Endothelial cell of umbilical vein (primary cell): ENCODE measurements at regions of chr20 and their contacts with region 1.

Region 1: GRCh38 chr20:44217342-44218092 is 6.9 kb upstream of the OSER1 start:
- DNase-seq: peak; percentile 55
- H3K4me3 ChIP-seq: no peak overlapping the region
- H3K27ac ChIP-seq: no peak overlapping the region
- H3K4me1 ChIP-seq: no peaks in the 10 kb centered on the region
- H3K27me3 ChIP-seq: no peaks in the 10 kb centered on the region
- CTCF ChIP-seq: peak; percentile 80 to 91
- POLR2A ChIP-seq: no peak

Region 2: GRCh38 chr20:44196271-44196670 is 21.2 kb before region 1 on chr20:
- CTCF ChIA-PET with region 1: interaction called, 10 read pairs
- POLR2A ChIA-PET with region 1: no interaction called
- dilution Hi-C with region 1: no loop called
- intact Hi-C with region 1: no loop called
- DNase-seq: no peak
- H3K4me3 ChIP-seq: no peak overlapping the region
- H3K27ac ChIP-seq: no peak overlapping the region
- H3K4me1 ChIP-seq: no peaks in the 10 kb centered on the region
- H3K27me3 ChIP-seq: peaks cover 0 to 2% of the 10 kb centered on the region in 2 experiments
- CTCF ChIP-seq: no peak
- POLR2A ChIP-seq: no peak

Region 3: GRCh38 chr20:44310664-44311639 is 93.4 kb after region 1 on chr20 and contains the start of gene FITM2:
- CTCF ChIA-PET with region 1: interaction called, 199 read pairs
- POLR2A ChIA-PET with region 1: interaction called, 3 read pairs
- dilution Hi-C with region 1: no loop called
- intact Hi-C with region 1: loop called (anchors 1 kb)
- DNase-seq: peak; percentile 96
- H3K4me3 ChIP-seq: peak within 1 kb of the TSS; percentile 37 to 71 (median 65)
- H3K27ac ChIP-seq: no peak within 1 kb of the TSS
- H3K4me1 ChIP-seq: peaks cover 8% of the 10 kb centered on the region
- H3K27me3 ChIP-seq: no peaks in the 10 kb centered on the region
- CTCF ChIP-seq: peak; percentile 99
- POLR2A ChIP-seq: peak; percentile 72
- total RNA-seq, gene FITM2: 6.8 and 7.7 TPM in 2 replicates

Region 4: DNA sequence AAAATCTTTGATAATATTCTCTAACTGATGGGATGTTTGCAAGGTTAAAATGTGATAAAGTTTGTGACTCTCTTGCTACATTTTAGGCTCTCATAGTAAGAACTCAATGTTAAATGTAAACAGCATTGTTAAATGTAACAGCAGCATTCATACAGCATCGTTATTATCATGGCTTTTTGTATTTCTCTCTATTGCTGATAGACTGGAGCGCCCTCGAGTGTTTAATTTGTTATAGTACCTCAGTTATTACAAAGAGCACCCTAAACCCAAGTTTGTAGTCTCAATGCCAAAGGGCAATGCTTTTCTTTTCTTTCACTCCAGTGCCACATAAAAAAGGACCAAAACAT is 243.3 kb after region 1 on chr20:
- CTCF ChIA-PET with region 1: interaction called, 9 read pairs
- POLR2A ChIA-PET with region 1: interaction called, 4 read pairs
- dilution Hi-C with region 1: no loop called
- intact Hi-C with region 1: loop called (anchors 2 kb)
- DNase-seq: peak; percentile 16
- H3K4me3 ChIP-seq: no peak overlapping the region
- H3K27ac ChIP-seq: no peak overlapping the region
- H3K4me1 ChIP-seq: no peaks in the 10 kb centered on the region
- H3K27me3 ChIP-seq: no peaks in the 10 kb centered on the region
- CTCF ChIP-seq: peak; percentile 5 to 19
- POLR2A ChIP-seq: no peak